Activated CD8-positive, alpha-beta T cell treated with anti-CD3 and anti-CD28 coated beads, Interleukin-2, amount 10 ng/mL, durations not matched to agents 7 days and 5 days (primary cell): ENCODE measurements at regions of chr22 and their contacts with region 1.

Region 1: GRCh38 chr22:24433813-24434470 is 6.5 kb downstream of the ADORA2A start:
- DNase-seq: no peak
- ATAC-seq: peak; percentile 46
- H3K4me3 Mint-ChIP-seq: peak overlapping the region; percentile 44
- H3K27ac Mint-ChIP-seq: peak overlapping the region; percentile 89
- H3K4me1 Mint-ChIP-seq: peaks cover 95% of the 10 kb centered on the region
- H3K27me3 Mint-ChIP-seq: no peaks in the 10 kb centered on the region

Region 2: DNA sequence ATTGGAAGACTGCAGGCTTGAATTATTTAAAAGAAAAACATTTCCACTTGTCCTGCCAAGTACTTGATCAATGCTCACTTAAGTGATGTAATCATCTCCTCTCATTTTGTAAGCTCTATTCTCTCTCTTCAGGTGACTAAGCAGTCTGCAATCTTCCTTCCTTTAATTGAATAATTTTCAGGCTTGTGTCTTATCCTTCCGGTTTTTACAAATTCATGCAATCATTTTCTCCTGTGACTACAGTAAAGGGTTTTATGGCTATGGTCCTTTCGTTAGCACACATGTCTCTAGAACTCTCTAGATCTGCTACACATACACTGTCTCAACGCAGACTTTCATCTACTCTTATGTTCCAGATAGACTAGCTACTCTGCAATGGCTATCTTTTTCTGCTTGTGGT is 48.6 kb after region 1 on chr22:
- CTCF ChIA-PET with region 1: interaction called, 11 read pairs
- POLR2A ChIA-PET with region 1: no interaction called
- DNase-seq: no peak
- ATAC-seq: no peak
- H3K4me3 Mint-ChIP-seq: no peak overlapping the region
- H3K27ac Mint-ChIP-seq: no peak overlapping the region
- H3K4me1 Mint-ChIP-seq: peaks cover 9% of the 10 kb centered on the region
- H3K27me3 Mint-ChIP-seq: peaks cover 5% of the 10 kb centered on the region

Region 3: GRCh38 chr22:24503137-24503842 is 69.3 kb after region 1 on chr22:
- CTCF ChIA-PET with region 1: interaction called, 27 read pairs
- POLR2A ChIA-PET with region 1: no interaction called
- DNase-seq: peak; percentile 70
- ATAC-seq: peak; percentile 76
- H3K4me3 Mint-ChIP-seq: no peak overlapping the region
- H3K27ac Mint-ChIP-seq: no peak overlapping the region
- H3K4me1 Mint-ChIP-seq: peaks cover 34% of the 10 kb centered on the region
- H3K27me3 Mint-ChIP-seq: peaks cover 6% of the 10 kb centered on the region